ENCODE measurements at regions of chr10 and their contacts with region 1.

Region 1: DNA sequence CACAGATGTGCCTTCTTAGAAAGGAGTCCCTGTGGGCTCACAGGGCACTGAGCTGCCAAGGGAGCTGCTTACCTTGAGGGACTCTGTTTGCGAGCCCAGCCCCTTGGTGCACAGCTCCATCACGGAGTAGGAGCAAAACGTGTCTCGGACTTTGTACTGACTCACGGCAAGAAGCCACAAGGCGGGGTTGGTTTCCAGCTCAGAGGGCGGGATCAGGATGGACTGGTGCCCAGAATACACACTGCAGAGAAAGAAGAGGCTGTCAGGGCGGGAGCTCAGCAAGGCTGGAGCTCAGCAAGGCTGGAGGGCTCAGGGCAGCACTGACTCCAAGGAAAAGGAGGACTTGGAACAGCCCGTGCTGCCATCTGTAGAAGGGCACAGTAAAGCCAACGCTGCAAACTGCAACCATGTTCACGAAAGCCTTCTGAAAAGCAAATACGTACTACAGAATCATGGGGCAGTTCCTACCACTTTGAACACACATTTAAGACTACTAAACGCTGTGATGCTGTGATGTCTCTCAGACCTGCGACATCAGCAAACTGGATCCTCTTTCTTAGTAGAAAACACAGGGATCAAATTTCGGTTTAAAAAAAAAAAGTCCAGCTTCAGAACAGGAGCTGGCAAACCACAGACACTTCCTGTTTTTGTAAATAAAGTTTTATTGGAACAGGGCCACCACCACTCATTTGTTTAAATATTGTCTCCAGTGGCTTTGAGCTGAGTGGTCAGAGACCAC is 194.3 kb downstream of the ZMYND11 start:
- DNase-seq: peak; percentile 88 to 91
- H3K4me3 ChIP-seq: peak overlapping the region; percentile 33
- H3K4me3 Mint-ChIP-seq: peak overlapping the region; percentile 72
- H3K27ac Mint-ChIP-seq: peak overlapping the region; percentile 84
- H3K4me1 ChIP-seq: peaks cover 8% of the 10 kb centered on the region
- H3K4me1 Mint-ChIP-seq: peaks cover 7% of the 10 kb centered on the region
- H3K27me3 ChIP-seq: no peaks in the 10 kb centered on the region
- H3K27me3 Mint-ChIP-seq: no peaks in the 10 kb centered on the region
- CTCF ChIP-seq: peak in 1 of 2 experiments; percentile 51

Region 2: GRCh38 chr10:248307-248706 is 81.2 kb before region 1 on chr10:
- CTCF ChIA-PET with region 1: no interaction called
- POLR2A ChIA-PET with region 1: no interaction called
- intact Hi-C with region 1: no loop called
- DNase-seq: no peak
- H3K4me3 ChIP-seq: no peak overlapping the region
- H3K4me3 Mint-ChIP-seq: no peak overlapping the region
- H3K27ac Mint-ChIP-seq: no peak overlapping the region
- H3K4me1 ChIP-seq: no peaks in the 10 kb centered on the region
- H3K4me1 Mint-ChIP-seq: no peaks in the 10 kb centered on the region
- H3K27me3 ChIP-seq: no peaks in the 10 kb centered on the region
- H3K27me3 Mint-ChIP-seq: no peaks in the 10 kb centered on the region
- CTCF ChIP-seq: no peak

Region 3: GRCh38 chr10:287814-288213 is 41.7 kb before region 1 on chr10:
- CTCF ChIA-PET with region 1: interaction called, 10 read pairs
- POLR2A ChIA-PET with region 1: interaction called, 5 read pairs
- intact Hi-C with region 1: no loop called
- DNase-seq: peak; percentile 80 to 85
- H3K4me3 ChIP-seq: no peak overlapping the region
- H3K4me3 Mint-ChIP-seq: no peak overlapping the region
- H3K27ac Mint-ChIP-seq: peak overlapping the region; percentile 25
- H3K4me1 ChIP-seq: peaks cover 7% of the 10 kb centered on the region; the same call in 1 of the 2 replicates
- H3K4me1 Mint-ChIP-seq: no peaks in the 10 kb centered on the region
- H3K27me3 ChIP-seq: no peaks in the 10 kb centered on the region
- H3K27me3 Mint-ChIP-seq: no peaks in the 10 kb centered on the region
- CTCF ChIP-seq: peak; percentile 64 to 81

Region 4: DNA sequence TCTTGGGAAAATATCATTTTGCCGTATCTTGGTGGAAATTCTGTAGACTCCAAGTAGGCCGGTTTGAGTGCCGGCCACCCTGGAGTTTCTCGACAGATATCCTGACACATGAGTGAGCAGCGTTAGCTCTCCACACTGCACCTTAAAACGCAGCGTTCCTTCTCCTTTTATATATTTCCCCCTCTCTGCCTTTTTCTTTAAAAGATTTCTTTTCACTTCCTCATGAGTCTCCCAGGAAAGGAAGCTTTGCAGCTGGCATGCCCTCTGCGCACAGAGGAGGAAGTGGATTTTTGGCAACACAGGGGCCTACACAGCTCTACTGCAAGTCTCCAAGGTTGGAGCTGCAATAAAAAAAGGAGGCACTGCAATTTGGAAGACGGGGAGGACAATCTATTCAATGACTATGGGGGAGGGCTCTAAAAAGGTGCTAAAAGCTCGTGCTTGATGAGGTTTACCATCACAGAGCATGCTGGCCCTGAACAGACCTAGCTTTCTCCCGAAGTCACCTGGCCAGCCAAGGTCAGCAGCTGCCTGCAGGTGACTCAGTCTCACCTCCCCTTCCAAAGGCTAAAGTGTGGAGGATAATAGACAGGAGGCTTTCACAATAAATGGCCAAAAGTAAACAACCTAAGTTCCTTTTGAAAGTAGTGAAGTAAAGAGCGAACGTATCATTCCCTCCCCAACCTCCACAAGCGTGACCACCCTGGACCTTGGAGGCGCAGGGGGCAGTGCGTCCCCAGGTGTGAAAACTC is 58.6 kb after region 1 on chr10:
- CTCF ChIA-PET with region 1: no interaction called
- POLR2A ChIA-PET with region 1: no interaction called
- intact Hi-C with region 1: loop called (anchors 5 kb)
- DNase-seq: peak in 1 of 2 experiments; percentile 45
- H3K4me3 ChIP-seq: no peak overlapping the region
- H3K4me3 Mint-ChIP-seq: no peak overlapping the region
- H3K27ac Mint-ChIP-seq: peak overlapping the region; percentile 29
- H3K4me1 ChIP-seq: no peaks in the 10 kb centered on the region
- H3K4me1 Mint-ChIP-seq: peaks cover 6% of the 10 kb centered on the region
- H3K27me3 ChIP-seq: no peaks in the 10 kb centered on the region
- H3K27me3 Mint-ChIP-seq: no peaks in the 10 kb centered on the region
- CTCF ChIP-seq: no peak

Measured in Caco-2 (cell line).